ENCODE measurements at regions of chr11 and their contacts with region 1.

Region 1: GRCh38 chr11:36746886-36747710 is 149.1 kb upstream of the RAG2 start:
- DNase-seq: peak; percentile 73 to 92
- H3K4me3 ChIP-seq: no peak overlapping the region
- H3K27ac ChIP-seq: no peak overlapping the region
- H3K4me1 ChIP-seq: peaks cover 0 to 8% (median 2%) of the 10 kb centered on the region in 4 experiments; a peak in 3 of 7 replicates
- H3K27me3 ChIP-seq: no peaks in the 10 kb centered on the region; a peak in 1 of 7 replicates
- CTCF ChIP-seq: peak; percentile 95 to 100 (median 100)
- EP300 ChIP-seq: no peak
- POLR2A ChIP-seq: no peak
- RAD21 ChIP-seq: peak; percentile 95 to 98

Region 2: DNA sequence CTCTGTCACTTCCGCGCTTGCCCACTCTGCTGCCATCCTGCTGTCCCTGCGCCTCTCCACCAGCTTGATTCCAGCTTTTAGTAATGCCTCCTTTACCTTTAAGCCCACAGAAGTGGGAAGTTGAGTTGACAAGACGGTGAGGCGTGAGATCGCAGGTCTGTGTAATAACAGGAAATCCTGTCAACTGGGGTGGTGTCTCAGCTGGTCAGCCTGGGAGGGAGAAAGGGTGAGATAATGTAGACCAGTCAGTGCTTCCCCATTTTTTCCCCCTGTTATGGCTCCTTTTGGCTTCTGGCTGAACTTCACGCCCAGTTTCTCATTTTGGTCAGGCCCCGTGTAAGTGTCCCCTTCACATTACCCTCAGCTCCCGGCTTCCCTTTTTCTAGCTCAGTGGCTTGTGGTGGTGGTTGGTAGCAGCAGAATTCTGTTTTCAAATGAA is 335.9 kb before region 1 on chr11:
- CTCF ChIA-PET with region 1: no interaction called
- POLR2A ChIA-PET with region 1: no interaction called
- DNase-seq: no peak
- H3K4me3 ChIP-seq: no peak overlapping the region
- H3K27ac ChIP-seq: no peak overlapping the region
- H3K4me1 ChIP-seq: no peaks in the 10 kb centered on the region
- H3K27me3 ChIP-seq: no peaks in the 10 kb centered on the region
- CTCF ChIP-seq: no peak
- EP300 ChIP-seq: no peak
- POLR2A ChIP-seq: no peak
- RAD21 ChIP-seq: no peak

Region 3: DNA sequence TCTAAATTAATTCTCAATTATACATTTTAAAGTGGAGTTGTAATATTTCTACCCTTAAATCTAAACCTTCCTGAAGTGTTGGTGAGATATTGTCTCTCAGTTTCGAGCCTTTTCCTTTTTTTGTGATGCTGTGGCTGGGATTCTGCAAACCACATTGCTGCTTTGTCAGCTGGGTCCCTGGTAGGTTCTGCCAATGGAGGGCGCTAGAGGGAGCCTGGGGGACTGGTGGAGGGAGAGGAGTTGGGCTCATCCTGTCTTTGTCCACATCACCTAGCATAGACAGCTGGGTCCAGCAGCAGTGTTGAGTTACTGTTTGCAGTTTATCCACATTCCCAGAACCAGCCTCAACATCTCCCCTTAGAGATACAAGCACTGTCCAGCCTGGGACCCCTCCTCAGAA is 278.0 kb before region 1 on chr11:
- CTCF ChIA-PET with region 1: no interaction called
- POLR2A ChIA-PET with region 1: no interaction called
- DNase-seq: peak; percentile 29 to 94
- H3K4me3 ChIP-seq: no peak overlapping the region
- H3K27ac ChIP-seq: no peak overlapping the region
- H3K4me1 ChIP-seq: peaks cover 0 to 4% (median under 1%) of the 10 kb centered on the region in 4 experiments; a peak in 1 of 7 replicates
- H3K27me3 ChIP-seq: no peaks in the 10 kb centered on the region
- CTCF ChIP-seq: peak; percentile 88 to 95 (median 89)
- EP300 ChIP-seq: no peak
- POLR2A ChIP-seq: no peak
- RAD21 ChIP-seq: peak; percentile 63 to 79

Region 4: GRCh38 chr11:36564376-36565030 is 182.6 kb before region 1 on chr11:
- CTCF ChIA-PET with region 1: interaction called, 155 read pairs
- POLR2A ChIA-PET with region 1: no interaction called
- DNase-seq: peak in 1 of 2 experiments; percentile 53
- H3K4me3 ChIP-seq: peak overlapping the region in 3 of 4 experiments; percentile 7 to 50 (median 20); a peak in 4 of 8 replicates
- H3K27ac ChIP-seq: no peak overlapping the region
- H3K4me1 ChIP-seq: no peaks in the 10 kb centered on the region
- H3K27me3 ChIP-seq: no peaks in the 10 kb centered on the region
- CTCF ChIP-seq: peak in 2 of 3 experiments; percentile 57 to 83; a peak in 3 of 4 replicates
- EP300 ChIP-seq: no peak
- POLR2A ChIP-seq: no peak
- RAD21 ChIP-seq: peak; percentile 85 to 89

Region 5: DNA sequence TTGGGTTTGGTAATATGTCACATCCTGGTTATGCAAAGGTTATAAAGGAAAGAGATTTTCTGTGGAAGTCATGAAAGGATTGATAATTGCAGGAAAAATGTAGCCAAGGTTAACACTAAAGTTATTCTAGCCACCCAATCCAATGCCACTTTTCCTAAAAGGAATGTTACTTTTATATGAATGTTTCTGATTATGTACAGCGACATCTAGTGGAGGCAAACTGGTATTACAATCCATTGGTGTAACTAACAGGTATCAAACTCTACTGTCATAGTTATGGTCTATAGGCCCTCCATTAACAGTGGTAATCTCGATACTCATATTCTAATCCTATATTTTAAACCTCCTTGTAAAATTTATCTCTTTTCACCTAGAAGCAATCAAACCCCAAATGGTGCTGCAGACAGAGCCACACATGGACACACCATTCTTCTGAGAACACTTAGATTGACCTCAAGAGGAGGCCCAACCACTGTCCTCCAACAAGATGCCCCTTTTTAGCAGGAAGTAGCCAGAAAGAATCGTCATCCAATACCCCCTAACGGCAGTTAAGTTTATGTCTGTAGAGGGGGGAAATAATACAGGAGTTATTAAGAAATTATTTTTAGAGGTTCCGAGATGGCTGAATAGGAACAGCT is 74.2 kb before region 1 on chr11:
- CTCF ChIA-PET with region 1: interaction called, 17 read pairs
- POLR2A ChIA-PET with region 1: no interaction called
- DNase-seq: no peak
- H3K4me3 ChIP-seq: no peak overlapping the region
- H3K27ac ChIP-seq: no peak overlapping the region
- H3K4me1 ChIP-seq: no peaks in the 10 kb centered on the region
- H3K27me3 ChIP-seq: no peaks in the 10 kb centered on the region
- CTCF ChIP-seq: peak in 2 of 3 experiments; percentile 20 to 62; a peak in 2 of 4 replicates
- EP300 ChIP-seq: no peak
- POLR2A ChIP-seq: no peak
- RAD21 ChIP-seq: peak; percentile 31 to 32; a peak in 3 of 4 replicates

Region 6: DNA sequence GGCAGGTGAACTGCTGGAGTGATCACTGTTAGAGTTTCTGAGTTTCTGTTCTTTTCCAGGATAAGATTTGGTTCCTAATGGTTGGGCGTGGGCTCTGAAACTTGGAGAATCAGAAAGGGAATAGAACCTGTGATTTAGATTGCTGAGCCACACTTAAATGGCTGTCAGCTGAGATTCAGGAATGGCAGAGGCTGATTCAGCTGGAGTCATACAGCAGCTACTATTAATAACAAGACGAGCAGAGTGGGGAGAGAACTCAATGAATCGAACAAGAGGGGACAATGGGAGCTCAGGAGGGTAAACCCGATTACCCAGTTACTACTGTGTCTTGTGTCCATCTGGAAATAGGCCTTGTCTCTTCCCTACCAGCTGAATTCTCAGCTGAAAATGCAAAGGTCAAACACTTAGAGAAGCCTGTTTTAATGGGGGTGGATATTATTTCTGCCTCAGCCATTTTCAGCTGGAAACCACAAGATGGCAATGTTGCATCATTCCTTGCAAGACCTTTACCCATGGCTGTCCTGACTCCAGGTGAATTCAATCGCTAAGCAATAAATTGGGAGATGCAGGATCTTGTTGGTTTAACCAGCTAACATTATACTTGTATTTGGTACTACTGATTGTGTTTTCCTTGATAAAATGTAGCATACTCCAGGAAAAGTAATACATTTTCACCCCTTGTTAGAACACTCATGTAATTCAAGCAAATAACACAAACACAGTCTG is 44.6 kb before region 1 on chr11:
- CTCF ChIA-PET with region 1: interaction called, 364 read pairs
- POLR2A ChIA-PET with region 1: interaction called, 5 read pairs
- DNase-seq: peak in 1 of 2 experiments; percentile 10
- H3K4me3 ChIP-seq: no peak overlapping the region
- H3K27ac ChIP-seq: no peak overlapping the region
- H3K4me1 ChIP-seq: peaks cover 0 to 9% (median 5%) of the 10 kb centered on the region in 4 experiments; a peak in 5 of 7 replicates
- H3K27me3 ChIP-seq: no peaks in the 10 kb centered on the region; a peak in 1 of 7 replicates
- CTCF ChIP-seq: peak in 2 of 3 experiments; percentile 92 to 96; a peak in 3 of 4 replicates
- EP300 ChIP-seq: no peak
- POLR2A ChIP-seq: no peak
- RAD21 ChIP-seq: peak; percentile 99

Region 7: GRCh38 chr11:36724742-36725385 is 22.2 kb before region 1 on chr11:
- CTCF ChIA-PET with region 1: interaction called, 235 read pairs
- POLR2A ChIA-PET with region 1: no interaction called
- DNase-seq: no peak
- H3K4me3 ChIP-seq: no peak overlapping the region
- H3K27ac ChIP-seq: no peak overlapping the region
- H3K4me1 ChIP-seq: no peaks in the 10 kb centered on the region; a peak in 1 of 7 replicates
- H3K27me3 ChIP-seq: peaks cover 2 to 7% (median 4%) of the 10 kb centered on the region in 4 experiments; a peak in 4 of 7 replicates
- CTCF ChIP-seq: no peak
- EP300 ChIP-seq: no peak
- POLR2A ChIP-seq: no peak
- RAD21 ChIP-seq: no peak

Region 8: DNA sequence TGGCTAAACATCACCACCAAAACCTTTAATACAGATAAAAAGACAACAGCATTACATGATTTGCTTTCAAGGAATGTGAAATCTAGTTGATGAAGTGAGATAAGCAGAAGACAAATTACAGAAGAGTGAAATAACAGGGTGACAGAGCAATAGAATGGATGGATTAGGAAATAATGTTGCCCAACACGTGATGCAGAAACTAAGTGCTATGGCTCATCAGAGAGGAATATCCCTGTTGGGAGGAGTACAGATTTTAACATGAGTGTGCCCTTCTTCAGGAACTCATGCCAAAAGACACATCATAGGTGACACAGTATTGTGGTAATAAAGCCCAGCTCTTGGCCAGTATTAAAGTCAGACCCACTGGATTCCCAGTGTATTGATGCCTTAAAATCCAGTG is 27.5 kb after region 1 on chr11:
- CTCF ChIA-PET with region 1: interaction called, 13 read pairs
- POLR2A ChIA-PET with region 1: no interaction called
- DNase-seq: no peak
- H3K4me3 ChIP-seq: no peak overlapping the region
- H3K27ac ChIP-seq: no peak overlapping the region
- H3K4me1 ChIP-seq: no peaks in the 10 kb centered on the region; a peak in 1 of 7 replicates
- H3K27me3 ChIP-seq: no peaks in the 10 kb centered on the region; a peak in 1 of 7 replicates
- CTCF ChIP-seq: no peak
- EP300 ChIP-seq: no peak
- POLR2A ChIP-seq: no peak
- RAD21 ChIP-seq: no peak

Region 9: GRCh38 chr11:36803084-36803483 is 56.0 kb after region 1 on chr11:
- CTCF ChIA-PET with region 1: interaction called, 10 read pairs
- POLR2A ChIA-PET with region 1: no interaction called
- DNase-seq: no peak
- H3K4me3 ChIP-seq: no peak overlapping the region
- H3K27ac ChIP-seq: no peak overlapping the region
- H3K4me1 ChIP-seq: no peaks in the 10 kb centered on the region
- H3K27me3 ChIP-seq: no peaks in the 10 kb centered on the region; a peak in 1 of 7 replicates
- CTCF ChIP-seq: no peak
- EP300 ChIP-seq: no peak
- POLR2A ChIP-seq: no peak
- RAD21 ChIP-seq: no peak

Region 10: DNA sequence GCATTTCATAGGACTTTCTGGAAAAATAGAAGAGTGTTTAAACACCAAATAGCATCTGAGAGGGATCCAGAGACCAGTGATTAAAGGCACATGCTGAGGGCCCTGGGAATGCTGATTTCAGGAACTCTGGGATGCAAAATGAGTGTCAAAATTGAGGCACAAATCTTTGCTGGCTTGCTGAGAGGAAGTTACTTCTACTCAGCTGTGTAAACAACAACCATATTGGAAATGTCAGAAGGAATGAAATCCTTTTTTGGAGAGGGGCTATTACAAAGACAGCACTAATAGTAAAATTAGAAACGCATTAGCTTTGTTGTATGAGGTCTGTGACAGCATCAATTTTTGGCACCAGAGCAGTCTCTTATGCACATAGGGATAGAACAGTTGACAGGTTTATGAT is 118.7 kb after region 1 on chr11:
- CTCF ChIA-PET with region 1: no interaction called
- POLR2A ChIA-PET with region 1: no interaction called
- DNase-seq: no peak
- H3K4me3 ChIP-seq: no peak overlapping the region
- H3K27ac ChIP-seq: no peak overlapping the region
- H3K4me1 ChIP-seq: no peaks in the 10 kb centered on the region
- H3K27me3 ChIP-seq: no peaks in the 10 kb centered on the region
- CTCF ChIP-seq: no peak
- EP300 ChIP-seq: no peak
- POLR2A ChIP-seq: no peak
- RAD21 ChIP-seq: no peak

Region 11: GRCh38 chr11:36885154-36885553 is 138.1 kb after region 1 on chr11:
- CTCF ChIA-PET with region 1: no interaction called
- POLR2A ChIA-PET with region 1: no interaction called
- DNase-seq: no peak
- H3K4me3 ChIP-seq: no peak overlapping the region
- H3K27ac ChIP-seq: no peak overlapping the region
- H3K4me1 ChIP-seq: no peaks in the 10 kb centered on the region
- H3K27me3 ChIP-seq: no peaks in the 10 kb centered on the region
- CTCF ChIP-seq: no peak
- EP300 ChIP-seq: no peak
- POLR2A ChIP-seq: no peak
- RAD21 ChIP-seq: no peak